ENCODE measurements at regions of chr3 and their contacts with region 1.

Region 1: GRCh38 chr3:184513276-184514170 is 48.1 kb upstream of the EPHB3 start:
- DNase-seq: peak; percentile 85 to 90 (median 87)
- ATAC-seq: peak; percentile 96 to 99 (median 98)
- H3K4me3 ChIP-seq: peak overlapping the region in 11 of 12 donors; percentile 15 to 60 (median 50)
- H3K27ac ChIP-seq: peak overlapping the region in 6 of 12 donors; percentile 34 to 45 (median 37)
- H3K4me1 ChIP-seq: peaks cover 0 to 21% (median 9%) of the 10 kb centered on the region in 12 donors
- H3K27me3 ChIP-seq: peaks cover 0 to 58% (median 19%) of the 10 kb centered on the region in 9 donors
- CTCF ChIP-seq: peak; percentile 78 to 90 (median 86)
- POLR2A ChIP-seq: no peak

Region 2: GRCh38 chr3:184371570-184372018 is 141.9 kb before region 1 on chr3:
- intact Hi-C with region 1: loop called in 7 of 10 experiments (anchors 1 to 10 kb)
- DNase-seq: peak; percentile 71 to 88 (median 85)
- ATAC-seq: peak; percentile 78 to 91 (median 87)
- H3K4me3 ChIP-seq: no peak overlapping the region
- H3K27ac ChIP-seq: peak overlapping the region in 1 of 12 donors; percentile 10
- H3K4me1 ChIP-seq: peaks cover 0 to 32% (median 17%) of the 10 kb centered on the region in 12 donors
- H3K27me3 ChIP-seq: peaks cover 0 to 11% (median 4%) of the 10 kb centered on the region in 9 donors
- CTCF ChIP-seq: peak; percentile 88 to 97 (median 94)
- POLR2A ChIP-seq: no peak

Region 3: GRCh38 chr3:184417619-184418327 is 95.8 kb before region 1 on chr3:
- intact Hi-C with region 1: loop called in 7 of 10 experiments (anchors 2 to 10 kb)
- DNase-seq: peak; percentile 59 to 83 (median 69)
- ATAC-seq: peak; percentile 47 to 93 (median 90)
- H3K4me3 ChIP-seq: no peak overlapping the region
- H3K27ac ChIP-seq: no peak overlapping the region
- H3K4me1 ChIP-seq: peaks cover 0 to 4% (median 0%) of the 10 kb centered on the region in 12 donors
- H3K27me3 ChIP-seq: no peaks in the 10 kb centered on the region
- CTCF ChIP-seq: peak; percentile 63 to 88 (median 82)
- POLR2A ChIP-seq: no peak

Measured in heart left ventricle (tissue), 16 donors.